ENCODE measurements at regions of chr1 and their contacts with region 1.

Region 1: GRCh38 chr1:88029899-88030298 is 654.2 kb upstream of the PKN2 start:
- DNase-seq: no peak
- H3K4me3 Mint-ChIP-seq: no peak overlapping the region
- H3K27ac Mint-ChIP-seq: no peak overlapping the region
- H3K4me1 Mint-ChIP-seq: no peaks in the 10 kb centered on the region
- H3K27me3 Mint-ChIP-seq: peaks cover 19% of the 10 kb centered on the region

Region 2: DNA sequence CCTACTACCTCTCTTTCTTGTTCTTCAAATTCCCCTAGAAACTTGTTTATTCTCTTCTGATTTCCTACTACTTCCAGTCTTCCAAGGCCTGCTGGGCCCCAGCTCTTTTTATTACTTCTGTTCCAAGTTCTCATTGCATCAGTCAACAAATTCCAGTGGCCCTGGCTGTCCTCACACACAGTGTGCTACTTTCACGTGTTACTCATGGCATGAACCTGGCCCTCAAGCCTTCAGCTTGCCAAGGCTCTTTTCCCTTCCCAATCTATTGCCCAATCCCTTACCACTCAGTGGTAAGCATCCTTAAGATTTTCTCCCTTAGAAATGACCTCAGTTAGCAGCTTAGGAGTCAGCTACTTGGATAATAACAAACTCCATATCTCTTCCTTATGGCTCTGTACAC is 87.7 kb before region 1 on chr1:
- CTCF ChIA-PET with region 1: no interaction called
- POLR2A ChIA-PET with region 1: no interaction called
- intact Hi-C with region 1: loop called (anchors 5 kb)
- DNase-seq: no peak
- H3K4me3 Mint-ChIP-seq: no peak overlapping the region
- H3K27ac Mint-ChIP-seq: no peak overlapping the region
- H3K4me1 Mint-ChIP-seq: no peaks in the 10 kb centered on the region
- H3K27me3 Mint-ChIP-seq: peaks cover 5% of the 10 kb centered on the region

Measured in activated CD4-positive, alpha-beta memory T cell treated with anti-CD3 and anti-CD28 coated beads for 36 hours (primary cell).